ENCODE measurements at regions of chr11 and their contacts with region 1.

Region 1: GRCh38 chr11:44556735-44557409 is 8.6 kb upstream of the CD82 start:
- DNase-seq: peak; percentile 60 to 69
- ATAC-seq: peak; percentile 66 to 95 (median 86)
- H3K4me3 ChIP-seq: no peak overlapping the region
- H3K27ac ChIP-seq: peak overlapping the region in 1 of 10 donors; percentile 4
- H3K4me1 ChIP-seq: peaks cover 0 to 28% (median 6%) of the 10 kb centered on the region in 9 donors
- H3K27me3 ChIP-seq: no peaks in the 10 kb centered on the region
- CTCF ChIP-seq: peak; percentile 79 to 90 (median 83)

Region 2: GRCh38 chr11:44611687-44612434 is 55.0 kb after region 1 on chr11:
- intact Hi-C with region 1: loop called (anchors 1 to 2 kb)
- DNase-seq: peak in 1 of 2 donors; percentile 41
- ATAC-seq: peak in 7 of 8 donors; percentile 12 to 78 (median 39)
- H3K4me3 ChIP-seq: no peak overlapping the region
- H3K27ac ChIP-seq: peak overlapping the region in 9 of 10 donors; percentile 8 to 57 (median 43)
- H3K4me1 ChIP-seq: peaks cover 9 to 76% (median 58%) of the 10 kb centered on the region in 9 donors
- H3K27me3 ChIP-seq: no peaks in the 10 kb centered on the region
- CTCF ChIP-seq: no peak

Region 3: GRCh38 chr11:44621140-44621681 is 64.3 kb after region 1 on chr11:
- intact Hi-C with region 1: loop called (anchors 1 to 2 kb)
- DNase-seq: peak; percentile 76 to 83
- ATAC-seq: peak; percentile 62 to 82 (median 70)
- H3K4me3 ChIP-seq: peak overlapping the region in 6 of 10 donors; percentile 10 to 39 (median 33)
- H3K27ac ChIP-seq: no peak overlapping the region
- H3K4me1 ChIP-seq: peaks cover 12 to 54% (median 37%) of the 10 kb centered on the region in 9 donors
- H3K27me3 ChIP-seq: no peaks in the 10 kb centered on the region
- CTCF ChIP-seq: peak; percentile 97 to 99 (median 98)

Region 4: GRCh38 chr11:44737245-44738085 is 180.6 kb after region 1 on chr11:
- intact Hi-C with region 1: no loop called
- DNase-seq: no peak
- ATAC-seq: no peak
- H3K4me3 ChIP-seq: no peak overlapping the region
- H3K27ac ChIP-seq: peak overlapping the region in 2 of 10 donors; percentile 9 to 14
- H3K4me1 ChIP-seq: peaks cover 14 to 95% (median 68%) of the 10 kb centered on the region in 9 donors
- H3K27me3 ChIP-seq: no peaks in the 10 kb centered on the region
- CTCF ChIP-seq: no peak

Region 5: GRCh38 chr11:44899959-44900358 is 343.1 kb after region 1 on chr11:
- intact Hi-C with region 1: loop called in 4 of 10 experiments (anchors 5 to 10 kb)
- DNase-seq: no peak
- ATAC-seq: peak in 6 of 8 donors; percentile 40 to 56 (median 48)
- H3K4me3 ChIP-seq: no peak overlapping the region
- H3K27ac ChIP-seq: no peak overlapping the region
- H3K4me1 ChIP-seq: peaks cover 0 to 12% (median 0%) of the 10 kb centered on the region in 9 donors
- H3K27me3 ChIP-seq: no peaks in the 10 kb centered on the region
- CTCF ChIP-seq: no peak

Region 6: DNA sequence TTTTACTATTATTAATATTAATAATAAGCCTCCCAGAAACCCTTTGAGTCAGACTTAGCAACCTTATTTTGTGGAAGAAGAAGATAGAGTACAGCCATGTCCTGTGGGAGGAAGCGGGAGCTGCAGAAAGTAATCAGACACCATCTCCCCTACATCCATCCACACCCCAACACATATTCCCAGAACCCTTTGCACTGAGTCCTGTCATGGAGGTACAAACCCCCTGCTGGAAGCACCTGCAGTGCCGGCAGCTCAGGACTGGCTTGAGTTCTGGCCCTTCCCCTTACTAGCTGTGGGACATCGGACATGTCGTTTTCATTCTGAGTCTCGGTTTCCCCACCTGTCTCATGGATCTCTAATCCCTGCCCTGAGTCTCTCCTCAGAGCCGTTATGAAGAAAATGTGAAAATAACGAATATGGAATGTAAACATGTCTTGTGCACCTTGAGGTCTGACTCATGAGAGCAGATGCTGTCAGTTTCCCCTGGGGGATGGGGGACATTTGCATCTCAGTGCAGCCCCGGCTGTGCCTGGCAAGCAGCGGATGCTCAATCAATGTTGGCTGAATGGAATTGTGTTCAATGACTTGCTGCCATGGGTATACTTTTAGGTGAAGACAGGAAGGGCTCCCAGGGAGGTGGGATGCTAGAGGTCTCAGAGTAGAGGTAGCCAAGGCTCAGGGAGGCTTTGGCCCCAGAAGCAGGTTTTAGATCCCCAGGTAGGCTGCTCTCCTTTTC is 348.4 kb after region 1 on chr11:
- intact Hi-C with region 1: loop called (anchors 2 to 10 kb)
- DNase-seq: no peak
- ATAC-seq: no peak
- H3K4me3 ChIP-seq: no peak overlapping the region
- H3K27ac ChIP-seq: no peak overlapping the region
- H3K4me1 ChIP-seq: peaks cover 0 to 29% (median 5%) of the 10 kb centered on the region in 9 donors
- H3K27me3 ChIP-seq: no peaks in the 10 kb centered on the region
- CTCF ChIP-seq: no peak

Region 7: DNA sequence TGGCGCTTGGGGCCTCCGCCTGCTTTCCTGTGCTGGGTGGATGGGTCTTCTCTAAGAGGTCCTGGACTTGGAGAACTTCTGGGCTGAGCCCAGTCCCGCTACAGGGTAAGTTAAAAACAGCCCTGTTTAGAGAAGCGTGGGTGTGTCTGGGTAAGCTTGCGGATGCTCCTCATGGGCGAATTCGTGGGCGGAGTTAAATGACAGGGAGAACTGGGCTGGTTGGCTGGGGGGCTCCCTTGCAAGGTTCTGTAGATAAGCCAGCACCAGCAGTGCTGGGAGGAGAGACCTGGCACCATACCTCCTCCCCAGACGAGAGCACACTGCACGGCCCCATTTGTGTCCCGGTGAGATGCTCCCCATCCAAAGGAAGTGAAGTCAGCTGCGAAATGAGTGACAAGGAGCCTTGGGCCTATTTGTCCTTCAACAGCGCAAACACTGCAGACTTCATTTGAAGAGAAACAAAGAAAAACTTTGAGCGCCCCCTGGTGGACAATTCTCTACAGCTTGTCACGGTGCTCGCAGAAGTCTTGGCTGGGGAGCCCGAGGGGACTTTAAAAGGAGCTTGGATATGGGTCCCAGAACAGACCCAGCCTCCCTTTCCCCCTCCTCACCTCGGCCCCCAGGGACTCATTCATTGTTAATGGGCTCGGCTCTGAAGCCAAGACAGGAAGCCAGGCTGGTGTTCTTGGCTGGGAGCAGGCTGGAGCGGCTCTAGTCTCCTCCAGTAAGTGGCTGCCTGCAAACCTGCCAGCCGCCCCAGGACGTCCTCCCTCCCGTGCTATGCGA is 354.4 kb after region 1 on chr11:
- intact Hi-C with region 1: loop called in 9 of 10 experiments (anchors 2 to 10 kb)
- DNase-seq: peak; percentile 67 to 95
- ATAC-seq: peak; percentile 73 to 93 (median 82)
- H3K4me3 ChIP-seq: peak overlapping the region in 3 of 10 donors; percentile 2 to 19 (median 10)
- H3K27ac ChIP-seq: peak overlapping the region in 8 of 10 donors; percentile 6 to 62 (median 30)
- H3K4me1 ChIP-seq: peaks cover 10 to 68% (median 37%) of the 10 kb centered on the region in 9 donors
- H3K27me3 ChIP-seq: no peaks in the 10 kb centered on the region
- CTCF ChIP-seq: peak; percentile 83 to 95 (median 91)